ENCODE measurements at regions of chr2 and their contacts with region 1.

Region 1: DNA sequence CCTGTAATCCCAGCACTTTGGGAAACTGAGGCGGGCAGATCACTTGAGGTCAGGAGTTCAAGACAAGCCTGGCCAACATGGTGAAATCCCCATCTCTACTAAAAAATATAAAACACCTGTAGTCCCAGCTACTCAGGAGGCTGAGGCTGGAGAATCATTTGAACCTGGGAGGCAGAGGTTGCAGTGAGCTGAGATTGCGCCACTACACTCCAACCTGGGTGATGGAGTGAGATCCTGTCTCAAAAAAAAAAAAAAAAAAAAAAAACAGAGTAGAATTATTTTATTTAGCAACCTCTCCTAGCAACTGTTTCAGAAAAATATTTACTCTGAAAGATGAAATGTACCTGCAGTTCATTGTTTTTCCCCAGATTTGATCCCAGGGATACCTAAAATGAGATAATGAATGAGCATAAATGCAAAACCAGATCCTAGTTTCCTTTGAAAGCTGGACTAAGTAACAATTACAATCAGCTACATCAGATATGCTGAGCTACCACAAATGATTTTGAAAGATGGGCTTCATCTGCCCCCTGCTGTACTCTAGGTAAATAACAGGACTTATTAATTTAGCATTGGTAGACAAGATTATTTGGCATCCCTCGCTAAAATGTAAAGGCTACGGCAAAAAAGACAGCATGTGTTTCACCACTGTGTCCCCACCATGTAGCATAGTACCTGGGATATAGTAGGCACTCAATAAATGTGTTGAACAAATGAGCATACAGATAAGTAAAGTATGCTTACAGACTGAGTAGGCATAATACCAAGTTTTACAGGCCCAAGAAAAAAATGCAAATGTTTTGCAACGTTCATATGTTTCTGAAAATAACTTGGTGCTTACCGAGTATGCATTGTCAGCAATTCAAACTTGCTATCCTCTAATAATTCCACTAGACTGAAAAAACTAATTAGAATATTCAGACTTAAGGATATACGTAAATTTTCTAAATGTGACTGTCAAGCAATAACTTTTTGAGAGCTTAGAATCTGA is 102.5 kb downstream of the ATL2 start:
- DNase-seq: no peak
- ATAC-seq: peak; percentile 68 to 75

Region 2: DNA sequence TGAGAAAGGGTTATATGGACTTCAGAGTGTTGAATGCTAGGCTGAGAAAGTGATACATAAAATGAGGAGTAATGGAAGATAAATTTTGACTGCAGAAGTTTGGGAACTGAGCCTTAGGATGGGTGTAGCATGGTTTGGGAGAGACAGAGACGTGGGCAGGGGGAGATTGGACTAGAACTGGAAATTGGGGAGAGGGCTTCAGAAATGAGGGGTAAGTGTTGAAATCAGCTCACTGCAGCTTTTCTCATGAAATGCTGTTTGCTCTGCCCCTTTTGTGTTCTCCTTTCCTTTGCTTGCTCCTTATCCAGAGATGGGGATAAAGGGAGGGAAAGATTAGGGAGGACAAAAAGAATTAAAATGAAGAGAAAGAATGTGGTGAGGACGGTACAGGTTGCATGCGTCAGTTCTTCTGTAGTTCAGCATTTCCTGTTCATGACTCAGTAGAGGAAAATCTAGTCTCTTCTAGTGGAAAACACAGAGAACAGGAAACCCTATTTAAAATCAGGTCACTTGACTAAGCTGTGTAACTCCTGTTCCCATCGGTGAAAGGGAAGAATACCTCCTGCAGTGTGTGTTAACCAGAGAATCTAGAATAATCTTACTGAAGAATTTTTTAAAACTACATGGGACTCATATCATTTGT is 1813.4 kb before region 1 on chr2:
- intact Hi-C with region 1: no loop called
- DNase-seq: no peak
- ATAC-seq: peak; percentile 15 to 73

Region 3: GRCh38 chr2:37389989-37390765 is 884.4 kb before region 1 on chr2:
- intact Hi-C with region 1: loop called in 1 of 2 experiments (anchors 10 kb)
- DNase-seq: no peak
- ATAC-seq: peak; percentile 69 to 83

Region 4: GRCh38 chr2:37890893-37891495 is 383.6 kb before region 1 on chr2:
- intact Hi-C with region 1: loop called in 1 of 2 experiments (anchors 10 kb)
- DNase-seq: peak; percentile 73
- ATAC-seq: peak; percentile 86 to 87

Region 5: DNA sequence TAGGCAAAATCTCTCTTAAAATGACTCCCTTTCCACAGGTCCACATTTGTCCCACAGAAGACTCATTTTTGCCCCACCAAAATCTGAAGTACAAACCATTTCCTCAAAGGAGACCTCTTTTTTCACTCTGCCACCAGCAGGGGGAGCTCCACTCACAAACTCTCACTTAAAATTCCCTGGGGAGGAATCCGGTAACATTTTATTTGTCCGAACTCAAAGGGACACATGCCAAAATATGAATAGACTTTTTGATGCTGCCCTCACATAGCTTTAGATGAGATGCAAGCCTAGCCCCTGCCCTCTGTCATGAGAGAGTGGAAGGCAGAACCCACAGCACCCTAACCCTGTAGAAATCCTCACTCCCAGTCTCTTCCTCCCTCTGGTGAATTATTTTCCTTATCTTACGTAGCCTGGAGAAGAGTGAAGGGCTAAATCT is 292.4 kb before region 1 on chr2:
- intact Hi-C with region 1: loop called (anchors 5 kb)
- DNase-seq: peak; percentile 80
- ATAC-seq: peak; percentile 23 to 34

Region 6: GRCh38 chr2:38064801-38065501 is 209.6 kb before region 1 on chr2:
- intact Hi-C with region 1: no loop called
- DNase-seq: no peak
- ATAC-seq: peak in 1 of 2 donors; percentile 40